Astrocyte of the cerebellum (primary cell): ENCODE measurements at regions of chr16 and their contacts with region 1.

Region 1: GRCh38 chr16:69424053-69424934 is at the start of gene CYB5B:
- DNase-seq: peak; percentile 98
- H3K4me3 ChIP-seq: peak within 1 kb of the TSS; percentile 98
- CTCF ChIP-seq: no peak

Region 2: DNA sequence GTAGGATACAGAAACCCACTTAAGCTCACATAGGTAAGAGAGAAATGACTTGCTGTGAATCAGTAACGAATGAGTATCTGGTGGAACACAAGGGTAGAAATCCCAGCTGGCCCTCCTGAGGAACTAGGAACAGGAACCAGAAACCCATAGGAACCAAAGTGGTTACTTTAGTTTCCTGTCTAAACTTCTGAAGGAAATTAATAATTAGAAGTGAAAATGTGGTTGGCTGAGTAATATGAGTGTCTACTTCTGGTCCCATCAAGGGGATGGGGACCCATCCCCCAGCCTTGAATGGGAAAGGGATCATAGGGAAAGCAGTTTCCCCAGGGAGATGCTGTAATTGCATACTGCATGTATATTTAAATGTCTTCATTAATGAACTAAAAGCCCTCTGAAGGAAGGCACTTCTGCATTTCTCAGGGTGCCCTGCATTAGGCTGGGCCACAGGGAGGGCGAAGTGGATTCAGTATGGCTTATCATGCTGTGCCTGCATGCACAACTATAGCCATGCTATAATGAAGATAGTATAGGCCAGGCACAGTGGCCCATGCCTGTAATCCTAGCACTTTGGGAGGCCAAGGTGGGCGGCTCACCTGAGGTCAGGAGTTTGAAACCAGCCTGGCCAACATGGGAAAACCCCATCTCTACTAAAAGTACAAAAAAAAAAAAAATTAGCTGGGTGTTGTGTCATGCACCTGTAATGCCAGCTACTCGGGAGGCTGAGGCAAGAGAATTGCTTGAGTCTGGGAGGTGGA is 45.7 kb after region 1 on chr16:
- in situ Hi-C with region 1: no loop called
- DNase-seq: no peak
- H3K4me3 ChIP-seq: no peak overlapping the region
- CTCF ChIP-seq: no peak

Region 3: DNA sequence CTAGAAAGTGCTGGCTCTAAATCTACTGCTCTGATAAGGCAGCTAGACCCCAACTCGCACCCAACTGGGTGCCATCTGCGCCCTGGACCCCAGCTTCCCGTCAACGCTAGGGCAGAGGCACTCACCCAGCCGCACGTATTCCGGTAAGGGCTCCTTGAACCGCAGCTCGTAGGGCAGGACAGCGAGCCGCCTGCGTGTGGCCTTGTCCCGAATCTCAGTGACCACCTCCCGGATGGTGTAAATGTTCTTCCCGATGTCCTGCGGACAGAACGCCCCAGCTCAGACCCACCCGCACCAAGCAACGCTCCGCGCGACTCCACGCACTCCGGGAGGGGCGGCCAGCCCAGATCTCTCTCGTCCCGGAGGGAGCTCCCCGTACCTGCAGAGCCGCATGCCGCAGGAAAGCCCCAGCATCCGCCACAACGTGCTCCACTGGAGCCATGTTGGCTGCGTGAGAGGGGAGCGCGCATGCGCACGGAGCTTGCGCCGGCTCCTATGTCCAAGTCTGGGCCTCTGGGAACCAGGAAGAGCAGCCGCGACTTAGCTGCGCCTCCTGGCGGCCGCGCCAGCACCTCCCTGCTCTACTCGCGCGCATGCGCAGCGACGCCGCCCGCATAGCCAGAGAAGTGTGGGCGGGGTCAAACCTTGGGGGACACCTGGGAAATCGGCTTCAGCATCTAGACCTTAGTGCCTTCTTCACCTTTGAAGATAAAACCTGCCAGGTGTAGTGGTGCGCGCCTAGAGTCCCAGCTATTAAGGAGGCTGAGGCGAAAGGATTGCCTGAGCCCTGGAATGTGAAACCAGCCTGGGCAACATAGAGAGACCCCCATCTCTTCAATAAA is 330.4 kb after region 1 on chr16 and contains the start of gene NOB1:
- in situ Hi-C with region 1: loop called (anchors 25 kb)
- DNase-seq: peak; percentile 94
- H3K4me3 ChIP-seq: peak within 1 kb of the TSS; percentile 98
- CTCF ChIP-seq: peak; percentile 97